CD8-positive, alpha-beta T cell (primary cell): ENCODE measurements at regions of chr18 and their contacts with region 1.

Region 1: GRCh38 chr18:46104128-46104911 is at the start of gene HAUS1:
- DNase-seq: peak; percentile 42 to 88 (median 81)
- ATAC-seq: peak; percentile 95
- H3K4me3 ChIP-seq: peak within 1 kb of the TSS; percentile 87 to 90
- H3K4me3 Mint-ChIP-seq: peak within 1 kb of the TSS; percentile 96
- H3K27ac ChIP-seq: peak within 1 kb of the TSS; percentile 42 to 52
- H3K27ac Mint-ChIP-seq: peak within 1 kb of the TSS; percentile 88
- H3K4me1 ChIP-seq: peaks cover 12% of the 10 kb centered on the region
- H3K4me1 Mint-ChIP-seq: peaks cover 31% of the 10 kb centered on the region
- H3K27me3 ChIP-seq: no peaks in the 10 kb centered on the region
- H3K27me3 Mint-ChIP-seq: no peaks in the 10 kb centered on the region
- CTCF ChIP-seq: no peak
- total RNA-seq, gene HAUS1: 6.3 to 8.8 TPM

Region 2: DNA sequence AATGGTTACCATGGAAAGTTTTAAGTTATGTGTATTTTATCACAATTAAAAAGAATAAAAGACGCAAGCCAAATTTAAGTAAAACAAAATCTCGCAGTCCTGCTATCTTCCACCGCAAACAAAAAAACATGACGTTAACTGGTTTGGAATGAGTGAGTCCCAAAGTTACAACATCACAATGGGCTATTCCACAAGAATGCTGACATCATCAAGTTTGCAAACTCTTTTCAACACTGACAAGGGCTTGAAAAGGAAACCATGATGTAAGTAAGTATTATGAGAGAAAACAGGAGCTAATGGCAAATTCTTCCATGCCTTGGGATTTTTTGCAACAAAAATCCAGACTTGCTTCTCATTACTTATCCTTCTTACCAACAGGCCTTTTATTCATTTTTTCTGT is 247.8 kb before region 1 on chr18:
- CTCF ChIA-PET with region 1: no interaction called
- POLR2A ChIA-PET with region 1: no interaction called
- intact Hi-C with region 1: no loop called
- DNase-seq: no peak
- ATAC-seq: no peak
- H3K4me3 ChIP-seq: no peak overlapping the region
- H3K4me3 Mint-ChIP-seq: no peak overlapping the region
- H3K27ac ChIP-seq: no peak overlapping the region
- H3K27ac Mint-ChIP-seq: no peak overlapping the region
- H3K4me1 ChIP-seq: no peaks in the 10 kb centered on the region
- H3K4me1 Mint-ChIP-seq: no peaks in the 10 kb centered on the region
- H3K27me3 ChIP-seq: no peaks in the 10 kb centered on the region
- H3K27me3 Mint-ChIP-seq: no peaks in the 10 kb centered on the region
- CTCF ChIP-seq: no peak

Region 3: GRCh38 chr18:46028536-46028891 is 75.8 kb before region 1 on chr18:
- CTCF ChIA-PET with region 1: no interaction called
- POLR2A ChIA-PET with region 1: no interaction called
- intact Hi-C with region 1: loop called in 1 of 2 experiments (anchors 5 kb)
- DNase-seq: no peak
- ATAC-seq: no peak
- H3K4me3 ChIP-seq: peak overlapping the region; percentile 66 to 75
- H3K4me3 Mint-ChIP-seq: peak overlapping the region; percentile 94
- H3K27ac ChIP-seq: no peak overlapping the region
- H3K27ac Mint-ChIP-seq: peak overlapping the region; percentile 68
- H3K4me1 ChIP-seq: no peaks in the 10 kb centered on the region
- H3K4me1 Mint-ChIP-seq: peaks cover 9% of the 10 kb centered on the region
- H3K27me3 ChIP-seq: no peaks in the 10 kb centered on the region
- H3K27me3 Mint-ChIP-seq: no peaks in the 10 kb centered on the region
- CTCF ChIP-seq: no peak

Region 4: DNA sequence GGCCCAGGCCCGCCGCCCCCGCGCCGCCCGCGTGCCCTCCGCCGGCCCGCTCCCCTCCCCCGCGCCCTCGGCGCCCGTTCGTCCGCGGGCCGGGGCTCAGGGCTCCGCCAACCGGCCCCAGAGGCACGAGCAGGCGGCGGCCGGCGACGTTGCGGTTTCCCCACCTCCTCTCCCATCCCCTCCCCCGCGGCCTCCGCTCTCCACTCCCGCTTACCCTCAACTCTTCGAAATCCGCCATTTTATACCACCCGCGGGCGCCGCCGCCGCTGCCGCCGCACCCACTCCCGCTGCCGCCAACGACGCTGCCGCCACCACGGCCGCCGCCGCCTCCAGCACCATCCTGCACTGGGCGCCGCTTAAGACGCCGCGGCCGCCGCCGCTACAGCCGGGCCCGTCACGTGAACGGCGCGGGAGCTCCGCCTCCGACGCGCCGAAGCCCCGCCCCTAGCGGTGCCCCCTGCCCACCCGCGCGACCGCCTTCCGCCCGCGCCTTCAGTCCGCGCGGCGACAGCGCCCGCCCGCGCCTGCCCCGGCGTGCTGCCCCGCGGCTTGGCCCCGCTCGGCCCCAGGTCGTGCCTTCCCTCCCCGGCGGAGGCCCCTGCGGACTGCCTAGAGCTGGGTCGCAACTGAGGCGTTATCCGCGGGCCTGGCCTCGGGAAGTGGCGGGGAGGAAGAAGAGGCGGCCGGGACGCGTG is 812.9 kb after region 1 on chr18 and contains the starts of genes KATNAL2 and PIAS2:
- CTCF ChIA-PET with region 1: no interaction called
- POLR2A ChIA-PET with region 1: no interaction called
- intact Hi-C with region 1: loop called in 1 of 2 experiments (anchors 10 kb)
- DNase-seq: peak; percentile 38 to 88 (median 69)
- ATAC-seq: peak; percentile 82
- H3K4me3 ChIP-seq: peak within 1 kb of the TSS; percentile 56 to 79
- H3K4me3 Mint-ChIP-seq: peak within 1 kb of the TSS; percentile 90
- H3K27ac ChIP-seq: peak within 1 kb of the TSS; percentile 55 to 75
- H3K27ac Mint-ChIP-seq: peak within 1 kb of the TSS; percentile 91
- H3K4me1 ChIP-seq: peaks cover 12% of the 10 kb centered on the region
- H3K4me1 Mint-ChIP-seq: peaks cover 55% of the 10 kb centered on the region
- H3K27me3 ChIP-seq: no peaks in the 10 kb centered on the region
- H3K27me3 Mint-ChIP-seq: no peaks in the 10 kb centered on the region
- CTCF ChIP-seq: no peak
- total RNA-seq, gene KATNAL2: 1.0 to 2.1 TPM
- total RNA-seq, gene PIAS2: 38.4 to 40.2 TPM